Activated CD4-positive, alpha-beta T cell treated with anti-CD3 and anti-CD28 coated beads for 36 hours (primary cell): ENCODE measurements at regions of chr14 and their contacts with region 1.

Region 1: DNA sequence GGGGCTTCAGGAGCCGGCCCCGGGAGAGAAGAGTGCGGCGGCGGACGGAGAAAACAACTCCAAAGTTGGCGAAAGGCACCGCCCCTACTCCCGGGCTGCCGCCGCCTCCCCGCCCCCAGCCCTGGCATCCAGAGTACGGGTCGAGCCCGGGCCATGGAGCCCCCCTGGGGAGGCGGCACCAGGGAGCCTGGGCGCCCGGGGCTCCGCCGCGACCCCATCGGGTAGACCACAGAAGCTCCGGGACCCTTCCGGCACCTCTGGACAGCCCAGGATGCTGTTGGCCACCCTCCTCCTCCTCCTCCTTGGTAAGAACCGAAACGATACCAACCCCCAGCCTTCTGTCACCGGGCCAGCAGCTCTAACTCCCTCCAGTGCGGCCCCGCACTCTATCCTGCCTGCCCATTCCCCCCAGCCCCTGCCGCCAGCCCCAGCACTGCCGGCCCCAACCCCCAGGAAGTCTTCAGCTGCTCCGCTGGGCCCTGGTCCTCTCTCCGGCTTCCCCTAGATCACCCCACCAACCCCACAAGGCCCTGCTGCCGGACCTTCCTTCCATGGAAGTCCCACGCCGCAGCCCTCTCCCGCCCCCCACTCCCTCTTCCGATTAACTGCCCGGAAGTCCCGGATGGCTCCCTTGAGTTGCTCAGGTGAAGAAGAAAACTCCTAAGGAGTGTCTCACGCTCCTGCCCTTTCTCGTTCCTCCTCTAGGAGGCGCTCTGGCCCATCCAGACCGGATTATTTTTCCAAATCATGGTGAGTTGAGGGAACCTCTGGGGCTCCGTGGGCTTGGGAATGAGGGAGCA is 693 bp downstream of the LRP10 start:
- DNase-seq: peak; percentile 84
- ATAC-seq: peak; percentile 13
- H3K4me3 Mint-ChIP-seq: peak overlapping the region; percentile 88
- H3K27ac Mint-ChIP-seq: peak overlapping the region; percentile 91
- H3K4me1 Mint-ChIP-seq: peaks cover 37% of the 10 kb centered on the region
- H3K27me3 Mint-ChIP-seq: no peaks in the 10 kb centered on the region

Region 2: DNA sequence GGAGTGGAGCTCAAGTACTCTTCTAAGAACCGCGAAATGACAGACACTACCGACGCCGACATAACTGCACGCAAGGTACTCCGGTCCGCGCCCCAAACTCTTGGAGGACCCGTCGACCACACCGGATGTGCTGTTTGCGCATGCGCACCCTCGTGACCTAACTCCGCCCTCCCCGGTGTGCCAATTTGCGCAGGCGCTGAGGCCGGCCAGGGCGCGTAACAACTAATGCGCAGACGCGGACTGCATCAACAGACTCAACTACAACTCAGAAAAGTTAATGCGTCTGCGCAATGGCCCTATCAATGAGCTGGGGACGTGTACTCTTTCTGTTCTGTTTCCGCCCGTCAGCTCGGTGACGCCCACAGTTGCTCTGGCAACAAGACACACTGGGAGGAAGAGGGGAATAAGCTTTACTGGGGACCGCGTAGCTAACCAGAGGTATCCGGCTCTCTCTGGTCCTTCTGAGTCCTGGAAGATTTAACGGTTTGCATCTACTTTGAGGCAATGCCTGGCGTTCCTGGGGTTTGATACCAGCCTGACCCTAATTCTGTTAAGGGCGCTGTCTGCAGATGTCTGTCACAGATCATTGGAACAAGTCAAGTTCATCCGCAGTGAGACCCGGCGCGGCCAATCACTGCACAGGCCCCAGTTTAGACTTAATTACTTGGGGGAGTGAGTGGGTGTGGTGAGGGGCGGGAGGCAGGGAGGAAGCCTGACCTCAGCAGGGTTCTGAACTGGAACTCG is 283.0 kb before region 1 on chr14 and contains the start of gene DAD1:
- CTCF ChIA-PET with region 1: interaction called, 6 read pairs
- POLR2A ChIA-PET with region 1: interaction called, 9 read pairs
- intact Hi-C with region 1: loop called in 1 of 2 experiments (anchors 1 kb)
- DNase-seq: peak; percentile 100
- ATAC-seq: peak; percentile 84
- H3K4me3 Mint-ChIP-seq: peak within 1 kb of the TSS; percentile 93
- H3K27ac Mint-ChIP-seq: peak within 1 kb of the TSS; percentile 97
- H3K4me1 Mint-ChIP-seq: peaks cover 72% of the 10 kb centered on the region
- H3K27me3 Mint-ChIP-seq: peaks cover 1% of the 10 kb centered on the region
- total RNA-seq, gene DAD1: 265 to 302 TPM

Region 3: GRCh38 chr14:22753586-22753985 is 118.6 kb before region 1 on chr14:
- CTCF ChIA-PET with region 1: no interaction called
- POLR2A ChIA-PET with region 1: no interaction called
- intact Hi-C with region 1: no loop called
- DNase-seq: no peak
- ATAC-seq: no peak
- H3K4me3 Mint-ChIP-seq: no peak overlapping the region
- H3K27ac Mint-ChIP-seq: no peak overlapping the region
- H3K4me1 Mint-ChIP-seq: peaks cover 7% of the 10 kb centered on the region
- H3K27me3 Mint-ChIP-seq: peaks cover 23% of the 10 kb centered on the region

Region 4: GRCh38 chr14:22766456-22767322 is 105.5 kb before region 1 on chr14 and contains the start of gene OXA1L:
- CTCF ChIA-PET with region 1: interaction called, 6 read pairs
- POLR2A ChIA-PET with region 1: no interaction called
- intact Hi-C with region 1: loop called in 1 of 2 experiments (anchors 1 kb)
- DNase-seq: peak; percentile 98
- ATAC-seq: peak; percentile 87
- H3K4me3 Mint-ChIP-seq: peak within 1 kb of the TSS; percentile 90
- H3K27ac Mint-ChIP-seq: peak within 1 kb of the TSS; percentile 99
- H3K4me1 Mint-ChIP-seq: peaks cover 32% of the 10 kb centered on the region
- H3K27me3 Mint-ChIP-seq: no peaks in the 10 kb centered on the region
- total RNA-seq, gene OXA1L: 136 to 148 TPM

Region 5: DNA sequence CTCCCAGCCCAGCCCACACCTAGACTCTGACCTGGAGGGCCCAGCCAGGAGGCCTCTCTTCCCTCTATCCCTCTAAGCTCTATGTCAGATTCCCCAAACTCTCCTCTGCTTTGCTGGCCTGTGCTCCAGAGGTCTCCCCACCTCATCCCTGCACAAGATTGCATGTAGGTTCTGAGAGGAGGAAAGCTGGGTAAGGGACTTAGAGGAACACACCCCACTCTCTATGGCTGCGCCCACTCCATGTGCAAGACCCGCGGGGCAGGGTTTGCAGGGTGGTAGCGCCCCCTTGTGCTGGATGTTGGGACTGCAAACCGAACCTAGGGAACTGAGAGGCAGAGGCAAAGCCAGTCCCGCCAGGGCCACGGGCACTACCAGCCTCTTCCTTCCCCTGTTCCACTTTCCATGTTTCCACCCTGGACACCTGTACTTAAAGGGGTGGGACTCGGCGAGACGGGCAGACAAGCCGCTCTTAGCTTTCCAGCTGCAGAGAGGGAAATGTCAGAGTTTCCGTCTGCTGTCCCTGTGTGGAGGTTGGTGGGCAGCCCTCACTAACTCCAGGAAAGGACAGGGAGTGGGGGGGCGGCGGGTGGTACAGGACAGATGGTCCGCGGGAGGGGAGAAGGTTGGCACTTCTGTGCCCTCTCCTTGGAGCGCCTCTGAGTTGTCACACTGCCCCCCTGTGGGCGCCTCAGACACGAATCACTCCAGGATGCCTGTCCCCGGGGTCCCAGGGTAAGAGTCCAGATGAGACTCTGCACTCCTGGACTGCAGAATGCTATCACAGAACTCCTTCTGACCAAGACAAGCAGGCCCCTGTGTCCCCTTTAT is 19.1 kb before region 1 on chr14:
- CTCF ChIA-PET with region 1: interaction called, 18 read pairs
- POLR2A ChIA-PET with region 1: no interaction called
- intact Hi-C with region 1: no loop called
- DNase-seq: peak; percentile 94
- ATAC-seq: peak; percentile 82
- H3K4me3 Mint-ChIP-seq: peak overlapping the region; percentile 69
- H3K27ac Mint-ChIP-seq: peak overlapping the region; percentile 81
- H3K4me1 Mint-ChIP-seq: peaks cover 26% of the 10 kb centered on the region
- H3K27me3 Mint-ChIP-seq: peaks cover 7% of the 10 kb centered on the region

Region 6: GRCh38 chr14:22900081-22900799 is 28.0 kb after region 1 on chr14:
- CTCF ChIA-PET with region 1: interaction called, 66 read pairs
- POLR2A ChIA-PET with region 1: interaction called, 3 read pairs
- intact Hi-C with region 1: loop called (anchors 1 kb)
- DNase-seq: peak; percentile 57
- ATAC-seq: peak; percentile 69
- H3K4me3 Mint-ChIP-seq: no peak overlapping the region
- H3K27ac Mint-ChIP-seq: peak overlapping the region; percentile 0
- H3K4me1 Mint-ChIP-seq: peaks cover 16% of the 10 kb centered on the region
- H3K27me3 Mint-ChIP-seq: no peaks in the 10 kb centered on the region

Region 7: DNA sequence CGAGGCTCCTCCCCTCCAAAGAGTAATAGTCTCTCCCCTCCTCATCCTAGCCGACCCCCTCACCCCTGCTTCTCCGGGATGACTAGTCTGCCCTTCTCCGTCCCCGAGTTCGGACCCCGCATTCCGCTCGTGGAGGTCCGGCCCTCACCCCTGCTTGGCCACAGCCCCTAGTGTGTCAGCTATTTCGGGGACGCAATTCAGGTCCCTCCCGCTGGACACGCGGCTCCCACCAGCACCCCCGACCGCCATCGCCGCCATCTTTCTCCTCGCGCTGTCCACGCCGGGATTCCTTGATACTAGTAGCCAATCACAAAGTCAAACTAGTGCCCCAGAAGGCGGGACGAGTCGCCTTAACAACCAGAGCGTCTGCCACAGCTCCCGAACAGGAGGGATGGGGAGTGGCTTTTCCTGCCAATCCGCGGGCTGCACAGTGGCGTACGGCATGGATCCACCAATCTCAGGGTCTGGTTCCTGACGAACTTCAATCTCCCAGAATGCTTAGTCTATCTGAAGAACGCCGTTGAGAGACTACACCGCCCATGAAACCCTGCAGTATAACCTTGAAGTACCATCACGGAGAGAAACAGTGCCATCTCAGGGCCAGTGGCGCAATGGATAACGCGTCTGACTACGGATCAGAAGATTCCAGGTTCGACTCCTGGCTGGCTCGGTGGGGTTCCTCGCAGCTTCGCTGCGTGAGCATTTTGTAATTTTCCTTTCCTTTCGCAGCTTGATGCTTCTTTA is 57.0 kb after region 1 on chr14 and contains the start of gene PRMT5:
- CTCF ChIA-PET with region 1: interaction called, 8 read pairs
- POLR2A ChIA-PET with region 1: no interaction called
- intact Hi-C with region 1: loop called (anchors 1 kb)
- DNase-seq: peak; percentile 99
- ATAC-seq: peak; percentile 98
- H3K4me3 Mint-ChIP-seq: no peak within 1 kb of the TSS
- H3K27ac Mint-ChIP-seq: no peak within 1 kb of the TSS
- H3K4me1 Mint-ChIP-seq: peaks cover 39% of the 10 kb centered on the region
- H3K27me3 Mint-ChIP-seq: no peaks in the 10 kb centered on the region
- total RNA-seq, gene PRMT5: 121 to 151 TPM

Region 8: GRCh38 chr14:23006544-23007419 is 134.5 kb after region 1 on chr14:
- CTCF ChIA-PET with region 1: no interaction called
- POLR2A ChIA-PET with region 1: no interaction called
- intact Hi-C with region 1: loop called in 1 of 2 experiments (anchors 1 kb)
- DNase-seq: peak; percentile 98
- ATAC-seq: peak; percentile 98
- H3K4me3 Mint-ChIP-seq: peak overlapping the region; percentile 95
- H3K27ac Mint-ChIP-seq: peak overlapping the region; percentile 99
- H3K4me1 Mint-ChIP-seq: peaks cover 45% of the 10 kb centered on the region
- H3K27me3 Mint-ChIP-seq: no peaks in the 10 kb centered on the region

Region 9: DNA sequence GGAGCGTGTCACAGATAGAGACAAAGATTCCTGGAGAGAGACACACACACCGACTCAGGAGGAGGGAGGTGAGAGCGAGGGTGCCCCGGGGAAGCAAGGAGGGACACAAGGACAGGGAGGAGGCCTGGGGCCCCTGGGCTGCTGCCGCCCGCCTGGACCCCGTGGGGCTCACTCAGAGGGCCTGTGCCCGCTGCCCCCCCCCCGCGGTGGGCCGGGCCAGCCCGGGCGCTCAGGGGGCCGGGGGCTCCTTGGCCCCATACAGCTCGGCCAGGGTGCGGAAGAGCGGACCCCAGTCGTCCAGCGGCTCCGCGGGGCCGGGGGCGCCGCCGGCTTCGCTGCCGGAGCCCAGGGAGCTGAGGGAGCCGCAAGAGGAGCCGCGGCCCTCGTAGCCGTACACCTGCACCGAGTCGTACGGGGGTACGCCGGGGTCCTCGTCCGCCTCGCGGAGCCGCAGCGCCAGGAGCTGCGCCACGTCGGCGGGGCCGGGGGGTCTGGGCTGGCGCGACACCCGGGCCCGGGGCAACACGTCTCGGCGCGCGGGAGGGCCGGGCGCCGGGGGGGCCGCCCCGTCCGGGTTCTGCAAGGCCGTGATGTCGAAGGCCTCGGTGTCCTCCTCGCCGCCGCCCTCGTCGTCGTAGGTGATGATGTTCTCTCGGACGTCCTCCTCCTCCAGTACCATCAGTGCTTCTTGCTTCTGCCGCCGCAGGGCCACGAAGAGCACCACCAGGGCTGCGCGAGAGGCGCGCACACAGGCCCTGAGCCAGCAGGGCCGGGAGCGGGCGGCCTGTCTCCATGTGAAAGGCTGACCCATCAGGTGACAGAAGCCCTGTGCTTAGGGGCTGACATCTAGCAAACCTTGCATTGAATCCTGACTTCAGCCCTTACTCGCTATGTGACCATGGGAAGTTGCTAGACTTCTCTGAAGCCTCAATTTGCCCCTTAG is 175.8 kb after region 1 on chr14:
- CTCF ChIA-PET with region 1: no interaction called
- POLR2A ChIA-PET with region 1: no interaction called
- intact Hi-C with region 1: no loop called
- DNase-seq: no peak
- ATAC-seq: no peak
- H3K4me3 Mint-ChIP-seq: no peak overlapping the region
- H3K27ac Mint-ChIP-seq: no peak overlapping the region
- H3K4me1 Mint-ChIP-seq: no peaks in the 10 kb centered on the region
- H3K27me3 Mint-ChIP-seq: peaks cover 2% of the 10 kb centered on the region

Region 10: GRCh38 chr14:23104591-23105347 is 232.5 kb after region 1 on chr14 and contains the start of gene CIROP:
- CTCF ChIA-PET with region 1: no interaction called
- POLR2A ChIA-PET with region 1: no interaction called
- intact Hi-C with region 1: no loop called
- DNase-seq: no peak
- ATAC-seq: no peak
- H3K4me3 Mint-ChIP-seq: no peak within 1 kb of the TSS
- H3K27ac Mint-ChIP-seq: no peak within 1 kb of the TSS
- H3K4me1 Mint-ChIP-seq: no peaks in the 10 kb centered on the region
- H3K27me3 Mint-ChIP-seq: no peaks in the 10 kb centered on the region
- total RNA-seq, gene CIROP: not detected